CD4-positive, alpha-beta T cell (primary cell): ENCODE measurements at regions of chr2 and their contacts with region 1.

Region 1: DNA sequence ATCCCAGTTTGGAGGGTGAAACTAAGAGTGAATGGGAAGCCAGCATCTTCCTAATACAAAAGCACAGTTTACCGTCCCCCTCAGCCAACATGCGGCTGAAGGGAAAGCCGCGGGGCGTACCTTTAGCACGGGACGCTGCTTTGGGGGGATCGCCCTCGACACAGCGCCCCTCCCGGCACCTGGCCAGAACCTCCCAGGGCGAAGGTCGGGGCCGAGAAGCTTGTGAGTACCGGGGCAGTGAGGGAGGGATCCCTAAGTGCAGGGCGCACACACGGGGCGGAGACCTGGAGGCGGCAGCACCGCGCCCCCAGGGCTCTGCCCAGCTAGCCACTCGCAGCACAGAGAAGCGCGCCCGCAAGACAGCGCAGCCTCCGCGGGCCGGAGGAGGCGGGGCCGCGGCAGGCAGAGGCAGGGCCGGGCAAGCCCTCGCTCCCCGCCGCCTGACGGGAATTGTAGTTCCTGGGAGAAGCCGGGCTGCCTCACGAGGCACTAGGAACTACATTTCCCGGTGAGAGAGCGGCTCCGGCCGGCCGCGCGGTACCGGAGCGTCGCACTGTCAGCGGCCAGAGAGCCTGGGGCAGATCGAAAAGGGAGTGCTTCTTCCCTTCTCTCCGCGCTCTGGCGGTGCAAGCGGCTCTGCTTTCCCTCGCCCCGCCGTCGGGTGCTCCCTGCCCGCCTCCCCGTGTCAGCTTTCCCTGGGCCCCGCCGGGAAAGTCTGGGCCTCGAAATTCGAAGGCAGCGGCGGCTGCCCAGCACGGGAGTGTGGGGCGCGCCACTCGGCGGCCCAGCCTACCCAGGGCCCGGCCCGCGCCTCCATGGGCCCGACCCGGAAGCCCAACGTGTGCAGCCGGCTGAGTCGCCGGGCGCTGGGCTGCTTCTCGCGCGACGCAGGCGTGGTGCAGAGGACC is at the starts of genes DCAF17 and METTL8:
- DNase-seq: peak; percentile 84 to 97 (median 92)
- ATAC-seq: peak; percentile 91
- H3K4me3 ChIP-seq: peak within 1 kb of the TSS; percentile 65
- H3K4me3 Mint-ChIP-seq: peak within 1 kb of the TSS; percentile 94
- H3K27ac ChIP-seq: peak within 1 kb of the TSS; percentile 93 to 96
- H3K27ac Mint-ChIP-seq: peak within 1 kb of the TSS; percentile 88
- H3K4me1 ChIP-seq: peaks cover 10% of the 10 kb centered on the region
- H3K4me1 Mint-ChIP-seq: peaks cover 62% of the 10 kb centered on the region
- H3K27me3 ChIP-seq: no peaks in the 10 kb centered on the region
- H3K27me3 Mint-ChIP-seq: no peaks in the 10 kb centered on the region
- CTCF ChIP-seq: peak; percentile 59
- total RNA-seq, gene DCAF17: 13.0 to 14.3 TPM
- total RNA-seq, gene METTL8: 9.7 to 11.5 TPM

Region 2: GRCh38 chr2:169694113-169694903 is 1739.7 kb before region 1 on chr2 and contains the starts of genes CFAP210 and PHOSPHO2:
- CTCF ChIA-PET with region 1: no interaction called
- POLR2A ChIA-PET with region 1: no interaction called
- intact Hi-C with region 1: loop called in 1 of 2 experiments (anchors 10 kb)
- DNase-seq: peak; percentile 97 to 99 (median 99)
- ATAC-seq: peak; percentile 91
- H3K4me3 ChIP-seq: peak within 1 kb of the TSS; percentile 70
- H3K4me3 Mint-ChIP-seq: peak within 1 kb of the TSS; percentile 91
- H3K27ac ChIP-seq: peak within 1 kb of the TSS; percentile 80 to 91
- H3K27ac Mint-ChIP-seq: peak within 1 kb of the TSS; percentile 95
- H3K4me1 ChIP-seq: peaks cover 18% of the 10 kb centered on the region
- H3K4me1 Mint-ChIP-seq: peaks cover 18% of the 10 kb centered on the region
- H3K27me3 ChIP-seq: peaks cover 0 to 5% of the 10 kb centered on the region in 2 experiments
- H3K27me3 Mint-ChIP-seq: no peaks in the 10 kb centered on the region
- CTCF ChIP-seq: no peak
- total RNA-seq, gene CFAP210: 2.2 to 3.1 TPM
- total RNA-seq, gene PHOSPHO2: 4.5 to 6.5 TPM

Region 3: DNA sequence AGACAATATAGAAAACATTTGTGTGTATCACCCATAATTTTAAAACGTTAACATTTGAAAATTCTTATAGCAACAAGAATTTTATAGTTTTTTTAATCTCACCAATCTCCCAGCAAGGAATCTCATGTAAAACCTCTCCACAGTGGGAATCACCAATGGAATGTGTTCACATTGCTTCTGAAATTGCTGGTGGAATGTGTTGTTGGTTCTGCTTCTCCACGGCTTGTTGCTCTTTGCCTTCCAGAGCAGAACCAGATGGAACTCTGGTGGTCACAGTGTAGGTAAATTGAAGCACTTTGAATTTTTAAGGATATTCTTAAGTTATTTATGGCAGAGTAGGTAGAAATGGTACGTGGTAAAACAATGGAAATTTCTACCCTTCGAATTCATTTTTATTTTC is 35.2 kb after region 1 on chr2:
- CTCF ChIA-PET with region 1: no interaction called
- POLR2A ChIA-PET with region 1: no interaction called
- intact Hi-C with region 1: no loop called
- DNase-seq: no peak
- ATAC-seq: no peak
- H3K4me3 ChIP-seq: no peak overlapping the region
- H3K4me3 Mint-ChIP-seq: no peak overlapping the region
- H3K27ac ChIP-seq: no peak overlapping the region
- H3K27ac Mint-ChIP-seq: no peak overlapping the region
- H3K4me1 ChIP-seq: no peaks in the 10 kb centered on the region
- H3K4me1 Mint-ChIP-seq: no peaks in the 10 kb centered on the region
- H3K27me3 ChIP-seq: no peaks in the 10 kb centered on the region
- H3K27me3 Mint-ChIP-seq: no peaks in the 10 kb centered on the region
- CTCF ChIP-seq: no peak

Region 4: GRCh38 chr2:171687287-171688128 is 253.5 kb after region 1 on chr2 and contains the start of gene DYNC1I2:
- CTCF ChIA-PET with region 1: no interaction called
- POLR2A ChIA-PET with region 1: no interaction called
- intact Hi-C with region 1: loop called in 1 of 2 experiments (anchors 5 kb)
- DNase-seq: peak; percentile 44 to 86 (median 60)
- ATAC-seq: peak; percentile 81
- H3K4me3 ChIP-seq: peak within 1 kb of the TSS; percentile 97
- H3K4me3 Mint-ChIP-seq: peak within 1 kb of the TSS; percentile 96
- H3K27ac ChIP-seq: peak within 1 kb of the TSS; percentile 49 to 52
- H3K27ac Mint-ChIP-seq: peak within 1 kb of the TSS; percentile 82
- H3K4me1 ChIP-seq: peaks cover 8% of the 10 kb centered on the region
- H3K4me1 Mint-ChIP-seq: peaks cover 36% of the 10 kb centered on the region
- H3K27me3 ChIP-seq: no peaks in the 10 kb centered on the region
- H3K27me3 Mint-ChIP-seq: no peaks in the 10 kb centered on the region
- CTCF ChIP-seq: no peak
- total RNA-seq, gene DYNC1I2: 10.5 to 11.6 TPM